Pancreas (tissue), 10 donors: ENCODE measurements at regions of chr5 and their contacts with region 1.

Region 1: GRCh38 chr5:135185481-135186065 is 151.5 kb upstream of the PITX1 start:
- DNase-seq: no peak
- ATAC-seq: no peak
- H3K4me3 ChIP-seq: no peak overlapping the region
- H3K27ac ChIP-seq: no peak overlapping the region
- H3K4me1 ChIP-seq: no peaks in the 10 kb centered on the region
- H3K27me3 ChIP-seq: peaks cover 0 to 30% (median 0%) of the 10 kb centered on the region in 4 donors
- CTCF ChIP-seq: no peak

Region 2: GRCh38 chr5:134917070-134917815 is 268.3 kb before region 1 on chr5:
- intact Hi-C with region 1: loop called in 1 of 3 experiments (anchors 10 kb)
- DNase-seq: no peak
- ATAC-seq: peak in 3 of 4 donors; percentile 41 to 49 (median 44)
- H3K4me3 ChIP-seq: no peak overlapping the region
- H3K27ac ChIP-seq: no peak overlapping the region
- H3K4me1 ChIP-seq: peaks cover 0 to 5% (median 0%) of the 10 kb centered on the region in 3 donors
- H3K27me3 ChIP-seq: no peaks in the 10 kb centered on the region
- CTCF ChIP-seq: no peak

Region 3: DNA sequence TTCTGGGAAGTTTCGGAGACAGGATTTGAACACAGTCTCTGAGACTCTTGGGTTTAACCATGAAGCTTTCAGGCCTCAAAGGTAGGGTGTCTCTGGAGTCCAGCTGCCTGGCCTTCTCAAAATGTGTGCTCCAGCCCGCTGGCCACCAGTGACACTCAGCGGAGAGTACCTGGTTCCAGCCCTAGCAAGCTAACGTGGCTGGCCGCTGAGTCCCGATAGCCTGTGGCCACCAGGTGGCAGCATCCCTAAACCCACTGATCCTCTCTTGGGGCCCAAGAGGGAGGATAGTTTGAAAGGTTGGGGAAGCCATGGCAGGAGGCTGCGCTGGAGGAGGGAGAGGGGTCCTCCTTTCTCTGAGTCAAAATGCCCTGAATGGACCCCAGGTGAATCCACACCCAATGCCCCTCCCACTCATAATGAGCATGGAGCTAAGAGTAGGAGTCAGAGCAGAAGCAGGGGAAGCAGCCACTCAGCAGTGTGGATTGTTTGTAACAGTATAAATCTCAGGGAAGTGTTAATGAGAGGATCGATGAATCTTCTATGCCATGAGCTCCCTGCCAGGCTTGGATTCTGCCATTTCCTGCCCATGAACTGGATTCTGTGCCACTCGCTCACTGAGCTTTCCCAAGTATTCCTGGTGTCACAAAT is 272.0 kb after region 1 on chr5:
- intact Hi-C with region 1: no loop called
- DNase-seq: peak; percentile 15 to 82 (median 61)
- ATAC-seq: peak; percentile 48 to 82 (median 75)
- H3K4me3 ChIP-seq: no peak overlapping the region
- H3K27ac ChIP-seq: no peak overlapping the region
- H3K4me1 ChIP-seq: no peaks in the 10 kb centered on the region
- H3K27me3 ChIP-seq: no peaks in the 10 kb centered on the region
- CTCF ChIP-seq: peak; percentile 60 to 72 (median 62)